Esophagus muscularis mucosa (tissue), 4 donors: ENCODE measurements at regions of chr3 and their contacts with region 1.

Region 1: DNA sequence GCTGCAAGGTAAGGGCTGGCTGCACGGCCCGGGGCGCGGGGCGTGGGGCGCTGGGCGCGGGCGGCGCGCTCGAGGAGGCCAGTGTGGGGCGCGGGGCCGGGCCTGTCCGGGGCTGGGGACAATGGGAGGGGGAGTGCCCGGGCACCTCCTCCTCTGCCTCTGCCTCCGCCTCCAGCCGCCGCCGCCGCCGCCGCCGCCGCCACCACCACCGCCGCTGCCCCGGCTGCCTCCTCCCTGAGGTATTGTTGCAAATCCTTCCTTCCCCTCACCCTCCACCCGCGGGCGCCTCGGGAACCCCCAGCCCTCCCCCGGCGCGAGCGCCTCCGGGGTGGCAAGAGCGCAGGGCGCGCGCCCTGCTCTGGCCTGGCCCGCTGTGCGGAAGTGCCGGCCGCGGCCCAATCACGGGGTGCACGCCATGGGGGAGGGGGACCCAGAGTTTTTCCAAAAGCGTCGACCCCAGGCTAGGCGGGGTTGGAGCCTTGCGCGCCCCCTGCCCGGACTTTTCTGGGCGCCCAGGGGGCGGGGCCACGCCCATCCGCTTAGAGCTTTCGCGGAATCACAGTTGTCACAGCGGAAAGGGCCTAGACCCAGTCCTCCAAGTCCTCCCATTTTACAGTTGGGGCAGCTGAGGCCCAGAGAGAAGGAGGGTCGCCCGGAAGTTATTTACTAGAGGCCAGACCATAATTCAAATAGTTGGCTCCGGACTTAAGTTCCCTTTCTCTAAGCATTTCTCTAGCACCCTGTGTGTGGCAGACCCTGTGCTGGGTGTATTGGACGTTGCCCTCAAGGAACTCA is at the start of gene LPP:
- DNase-seq: peak; percentile 93
- H3K4me3 ChIP-seq: peak within 1 kb of the TSS; percentile 84 to 92 (median 90)
- H3K27ac ChIP-seq: peak within 1 kb of the TSS; percentile 98 to 99 (median 99)
- H3K4me1 ChIP-seq: peaks cover 22 to 68% (median 57%) of the 10 kb centered on the region in 4 donors
- H3K27me3 ChIP-seq: no peaks in the 10 kb centered on the region
- CTCF ChIP-seq: peak in 1 of 3 experiments; percentile 10
- EP300 ChIP-seq: no peak
- POLR2A ChIP-seq: peak; percentile 39
- total RNA-seq, gene LPP: 1,872 to 3,079 (median 2,300) TPM

Region 2: GRCh38 chr3:188212308-188212969 is 58.2 kb after region 1 on chr3:
- intact Hi-C with region 1: loop called (anchors 5 kb)
- DNase-seq: peak; percentile 95
- H3K4me3 ChIP-seq: peak overlapping the region; percentile 50 to 67 (median 56)
- H3K27ac ChIP-seq: peak overlapping the region; percentile 90 to 98 (median 94)
- H3K4me1 ChIP-seq: peaks cover 39 to 67% (median 54%) of the 10 kb centered on the region in 4 donors
- H3K27me3 ChIP-seq: no peaks in the 10 kb centered on the region
- CTCF ChIP-seq: no peak
- EP300 ChIP-seq: peak; percentile 71
- POLR2A ChIP-seq: peak; percentile 23

Region 3: GRCh38 chr3:188220988-188221818 is 67.0 kb after region 1 on chr3:
- intact Hi-C with region 1: loop called (anchors 5 kb)
- DNase-seq: peak; percentile 96
- H3K4me3 ChIP-seq: peak overlapping the region; percentile 27 to 67 (median 52)
- H3K27ac ChIP-seq: peak overlapping the region; percentile 90 to 98 (median 94)
- H3K4me1 ChIP-seq: peaks cover 76 to 96% (median 89%) of the 10 kb centered on the region in 4 donors
- H3K27me3 ChIP-seq: no peaks in the 10 kb centered on the region
- CTCF ChIP-seq: no peak
- EP300 ChIP-seq: peak; percentile 100
- POLR2A ChIP-seq: no peak

Region 4: DNA sequence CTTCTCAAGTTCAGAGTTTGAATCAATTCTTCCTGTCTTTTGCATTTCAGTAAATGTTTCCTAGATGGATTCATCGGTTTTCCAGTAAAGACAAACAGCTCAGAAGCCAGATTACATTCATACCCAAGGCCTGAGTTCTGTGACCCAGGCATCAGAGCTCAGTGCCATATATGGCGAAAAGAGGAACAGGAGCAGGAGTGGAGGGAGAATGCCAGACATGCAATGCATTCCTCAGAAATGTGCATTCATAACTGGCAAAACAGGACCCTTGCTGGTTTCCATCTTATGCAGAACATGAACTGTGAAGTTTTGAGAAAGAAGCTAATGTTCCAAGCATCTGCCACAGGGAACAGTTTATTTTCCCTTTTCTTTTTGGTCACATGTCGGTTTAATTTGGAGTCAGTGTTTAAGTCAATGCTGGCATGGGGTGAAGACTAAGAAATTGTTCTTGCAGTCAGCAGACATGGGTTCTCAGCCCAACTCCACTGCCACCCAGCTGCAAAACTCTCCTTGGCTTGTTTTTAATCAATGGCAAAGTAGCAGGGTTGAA is 116.3 kb after region 1 on chr3:
- intact Hi-C with region 1: loop called (anchors 5 kb)
- DNase-seq: no peak
- H3K4me3 ChIP-seq: peak overlapping the region in 1 of 4 donors; percentile 11
- H3K27ac ChIP-seq: peak overlapping the region; percentile 90 to 98 (median 93)
- H3K4me1 ChIP-seq: peaks cover 73 to 100% (median 97%) of the 10 kb centered on the region in 4 donors
- H3K27me3 ChIP-seq: no peaks in the 10 kb centered on the region
- CTCF ChIP-seq: peak in 2 of 3 experiments; percentile 43 to 65
- EP300 ChIP-seq: peak; percentile 97
- POLR2A ChIP-seq: no peak